AG04450 (cell line): ENCODE measurements at regions of chr12 and their contacts with region 1.

Region 1: GRCh38 chr12:96516472-96517430 is 27.4 kb downstream of the CFAP54 start:
- DNase-seq: peak; percentile 65
- H3K4me3 ChIP-seq: no peak overlapping the region
- H3K27ac ChIP-seq: no peak overlapping the region
- H3K27me3 ChIP-seq: no peaks in the 10 kb centered on the region
- CTCF ChIP-seq: peak; percentile 53

Region 2: GRCh38 chr12:95998611-95999286 is 518.0 kb before region 1 on chr12:
- CTCF ChIA-PET with region 1: interaction called, 13 read pairs
- POLR2A ChIA-PET with region 1: no interaction called
- DNase-seq: peak; percentile 10
- H3K4me3 ChIP-seq: no peak overlapping the region
- H3K27ac ChIP-seq: no peak overlapping the region
- H3K27me3 ChIP-seq: peaks cover 2% of the 10 kb centered on the region
- CTCF ChIP-seq: peak; percentile 65

Region 3: DNA sequence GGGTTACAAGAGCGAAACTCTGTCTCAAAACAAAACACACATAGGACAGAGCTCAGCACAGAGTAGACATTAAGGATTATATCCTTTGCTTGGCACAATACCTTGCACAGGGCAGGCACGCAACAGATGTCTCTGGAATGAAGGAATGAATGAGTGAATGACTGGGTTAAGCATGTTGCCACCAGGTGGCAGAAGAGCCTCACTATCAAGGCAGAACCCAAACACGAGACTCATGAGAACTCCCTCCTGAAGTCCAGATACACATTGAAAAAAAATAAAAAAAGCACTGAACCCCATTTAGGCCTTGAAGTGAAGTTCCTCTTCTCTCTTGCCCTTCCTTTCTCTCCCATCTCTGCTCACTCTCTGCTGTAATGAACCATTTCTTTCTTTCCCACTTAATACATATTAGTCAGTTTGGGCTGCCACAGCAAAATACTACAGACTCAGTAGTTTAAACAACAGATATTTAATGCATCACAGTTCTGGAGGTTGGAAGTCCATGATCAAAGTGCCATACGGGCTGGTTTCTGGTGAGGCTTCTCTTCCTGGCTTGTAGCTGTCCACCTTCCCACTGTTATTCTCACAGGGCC is 454.8 kb before region 1 on chr12:
- CTCF ChIA-PET with region 1: interaction called, 59 read pairs
- POLR2A ChIA-PET with region 1: no interaction called
- DNase-seq: peak; percentile 69
- H3K4me3 ChIP-seq: no peak overlapping the region
- H3K27ac ChIP-seq: no peak overlapping the region
- H3K27me3 ChIP-seq: no peaks in the 10 kb centered on the region
- CTCF ChIP-seq: peak; percentile 84

Region 4: DNA sequence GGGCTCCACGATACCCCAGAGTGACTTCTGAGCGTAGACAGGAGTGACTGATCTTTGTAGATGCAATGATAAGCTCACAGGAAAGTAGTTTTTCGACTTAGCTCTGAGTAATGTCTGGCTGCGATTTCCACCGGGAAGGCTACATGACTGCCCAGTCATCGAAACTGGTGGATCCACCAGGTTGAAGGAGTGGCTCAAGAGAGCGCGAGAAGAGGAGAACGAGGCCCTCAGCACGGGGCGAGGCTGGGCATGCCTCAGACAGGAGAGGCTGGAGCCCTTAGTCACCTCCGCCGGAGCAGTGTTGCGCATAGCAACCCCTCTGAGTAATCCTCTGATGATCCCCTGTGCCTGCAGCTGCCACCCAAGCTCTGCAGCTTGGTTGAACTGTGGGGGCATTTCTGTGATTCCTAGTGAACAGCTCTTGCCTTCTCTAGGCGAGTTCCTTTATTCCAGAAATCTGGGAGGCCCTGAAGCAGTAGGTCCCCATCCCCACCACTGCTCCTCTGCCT is 297.0 kb before region 1 on chr12:
- CTCF ChIA-PET with region 1: interaction called, 43 read pairs
- POLR2A ChIA-PET with region 1: interaction called, 6 read pairs
- DNase-seq: peak; percentile 93
- H3K4me3 ChIP-seq: peak overlapping the region; percentile 25
- H3K27ac ChIP-seq: peak overlapping the region; percentile 98
- H3K27me3 ChIP-seq: no peaks in the 10 kb centered on the region
- CTCF ChIP-seq: no peak

Region 5: GRCh38 chr12:96258104-96258961 is 258.4 kb before region 1 on chr12:
- CTCF ChIA-PET with region 1: interaction called, 19 read pairs
- POLR2A ChIA-PET with region 1: no interaction called
- DNase-seq: no peak
- H3K4me3 ChIP-seq: no peak overlapping the region
- H3K27ac ChIP-seq: peak overlapping the region; percentile 49
- H3K27me3 ChIP-seq: no peaks in the 10 kb centered on the region
- CTCF ChIP-seq: no peak

Region 6: DNA sequence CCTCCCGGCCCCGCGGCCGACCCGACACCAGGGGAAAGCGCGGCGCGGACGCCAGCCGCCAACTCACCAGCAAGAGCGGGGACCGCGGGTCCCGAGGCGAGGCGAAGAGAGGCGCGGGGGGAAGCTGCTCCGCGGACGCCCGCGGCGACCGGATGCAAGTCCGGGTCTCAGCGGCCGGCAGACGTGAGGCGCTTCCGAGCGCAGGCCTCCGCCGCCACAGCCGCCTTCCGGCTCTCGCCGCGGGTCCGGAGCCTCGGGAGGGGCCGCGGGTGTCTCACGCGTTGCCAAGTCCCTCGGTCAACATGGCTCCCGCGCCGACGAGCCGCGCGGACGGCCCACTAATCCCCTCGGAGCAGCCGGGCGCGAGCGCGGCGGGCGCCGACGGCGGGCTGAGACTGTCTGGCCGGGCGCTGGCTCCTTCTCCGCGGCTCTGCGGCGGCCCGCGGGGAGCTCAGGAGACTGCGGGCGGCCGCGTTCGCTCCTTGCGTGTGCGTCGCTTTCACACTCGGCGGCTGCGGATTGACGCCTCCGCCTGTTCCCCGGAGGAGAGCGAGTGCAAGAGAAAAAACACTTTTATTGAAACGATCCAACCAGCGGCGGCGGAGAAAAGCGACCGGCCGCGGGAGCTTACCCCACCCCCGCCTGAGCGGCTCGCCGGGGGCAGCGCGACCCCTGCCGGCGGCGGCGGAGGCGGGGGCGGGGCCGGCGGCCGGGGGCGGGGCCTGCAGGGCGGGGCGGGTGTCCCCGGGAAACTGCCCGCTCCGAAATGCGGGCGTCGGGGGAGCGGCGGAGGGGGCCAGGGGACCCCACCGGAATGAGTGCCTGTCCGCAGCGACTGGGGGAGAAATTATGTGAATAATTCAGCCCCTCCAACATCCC is 116.6 kb before region 1 on chr12 and contains the start of gene CDK17:
- CTCF ChIA-PET with region 1: interaction called, 52 read pairs
- POLR2A ChIA-PET with region 1: interaction called, 7 read pairs
- DNase-seq: peak; percentile 69
- H3K4me3 ChIP-seq: peak within 1 kb of the TSS; percentile 94
- H3K27ac ChIP-seq: peak within 1 kb of the TSS; percentile 93
- H3K27me3 ChIP-seq: no peaks in the 10 kb centered on the region
- CTCF ChIP-seq: peak; percentile 40
- polyA plus RNA-seq, gene CDK17: 50.2 and 67.8 TPM in 2 replicates

Region 7: GRCh38 chr12:96658124-96658725 is 141.5 kb after region 1 on chr12:
- CTCF ChIA-PET with region 1: no interaction called
- POLR2A ChIA-PET with region 1: no interaction called
- DNase-seq: no peak
- H3K4me3 ChIP-seq: no peak overlapping the region
- H3K27ac ChIP-seq: no peak overlapping the region
- H3K27me3 ChIP-seq: no peaks in the 10 kb centered on the region
- CTCF ChIP-seq: no peak